Esophagus muscularis mucosa (tissue), 4 donors: ENCODE measurements at regions of chr15 and their contacts with region 1.

Region 1: DNA sequence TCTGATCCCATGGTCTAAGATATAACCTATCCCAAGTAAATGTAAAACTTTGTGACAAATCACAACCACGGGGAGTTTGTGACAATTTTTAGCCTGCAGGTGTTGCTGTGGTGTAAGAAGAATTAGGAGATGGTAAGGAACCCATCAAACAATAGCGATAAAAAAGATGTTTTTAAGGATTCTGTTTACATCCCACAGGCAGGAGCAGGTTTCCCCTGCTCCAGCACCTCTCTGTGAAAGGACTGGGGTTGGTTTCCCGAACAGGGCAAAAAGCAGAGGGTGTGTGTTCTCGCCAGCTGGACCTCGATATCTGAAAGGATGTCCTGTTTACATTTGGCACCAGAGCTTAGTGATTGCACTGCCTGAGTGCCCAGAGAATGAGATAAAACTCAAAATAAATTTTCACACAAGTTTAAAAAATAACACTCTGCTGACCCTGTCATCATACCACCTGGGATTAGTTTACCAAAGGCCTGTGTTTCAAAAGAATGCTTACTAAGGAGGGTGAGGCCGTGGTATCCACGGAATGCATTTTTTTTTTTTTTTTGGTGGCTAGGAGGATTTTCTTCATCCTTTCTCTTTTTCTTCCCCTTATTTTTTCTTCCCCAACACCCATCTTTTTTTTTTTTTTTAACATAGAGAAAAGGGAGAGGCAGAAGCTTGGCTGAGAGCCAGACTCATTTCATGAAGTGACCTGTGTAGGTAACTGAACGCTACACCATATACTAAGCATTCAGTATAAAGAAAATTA is 151.8 kb upstream of the DPH6 start:
- DNase-seq: no peak
- H3K4me3 ChIP-seq: peak overlapping the region in 1 of 4 donors; percentile 22
- H3K27ac ChIP-seq: peak overlapping the region; percentile 51 to 74 (median 60)
- H3K4me1 ChIP-seq: peaks cover 49 to 65% (median 52%) of the 10 kb centered on the region in 4 donors
- H3K27me3 ChIP-seq: no peaks in the 10 kb centered on the region
- CTCF ChIP-seq: peak; percentile 10 to 32 (median 28)
- EP300 ChIP-seq: no peak
- POLR2A ChIP-seq: no peak

Region 2: GRCh38 chr15:35545824-35546510 is 151.8 kb before region 1 on chr15 and contains the start of gene DPH6:
- intact Hi-C with region 1: loop called (anchors 10 kb)
- DNase-seq: peak; percentile 95
- H3K4me3 ChIP-seq: peak within 1 kb of the TSS; percentile 74 to 85 (median 80)
- H3K27ac ChIP-seq: peak within 1 kb of the TSS; percentile 93 to 98 (median 96)
- H3K4me1 ChIP-seq: peaks cover 9 to 37% (median 33%) of the 10 kb centered on the region in 4 donors
- H3K27me3 ChIP-seq: no peaks in the 10 kb centered on the region
- CTCF ChIP-seq: peak in 2 of 3 experiments; percentile 7 to 9
- EP300 ChIP-seq: no peak
- POLR2A ChIP-seq: no peak
- total RNA-seq, gene DPH6: 7.7 to 12.9 (median 8.5) TPM

Region 3: DNA sequence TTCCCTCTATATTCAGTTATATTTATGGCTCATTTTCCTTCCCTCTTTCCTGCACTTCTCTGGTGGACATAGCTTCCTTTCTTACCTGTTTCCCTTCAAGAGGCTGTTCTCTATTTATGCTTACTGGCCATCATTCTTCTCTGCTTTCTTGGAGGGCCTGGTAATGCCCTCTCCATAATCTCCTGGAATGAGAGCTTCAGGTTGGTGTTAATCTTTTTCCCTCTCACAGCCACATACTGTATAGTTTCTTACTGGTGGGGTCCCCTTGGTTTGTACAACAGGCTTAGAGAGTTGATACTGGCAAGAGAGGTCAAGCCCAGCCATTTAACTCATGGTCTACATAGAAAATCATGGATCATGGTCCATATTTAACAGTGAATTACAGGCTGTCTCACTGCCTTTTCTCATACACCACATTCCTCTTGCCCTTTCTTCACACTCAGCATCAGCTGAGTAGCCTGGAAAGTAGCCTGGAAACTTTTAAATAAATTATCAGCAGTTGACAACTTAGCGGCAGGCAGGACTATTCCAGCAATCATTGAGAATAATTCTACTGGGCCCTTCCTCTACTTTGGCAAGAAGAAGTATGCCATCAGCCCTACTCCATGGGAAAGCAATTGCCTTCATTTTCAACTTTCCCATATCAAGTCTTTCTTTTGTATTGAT is 113.7 kb before region 1 on chr15:
- intact Hi-C with region 1: no loop called
- DNase-seq: no peak
- H3K4me3 ChIP-seq: no peak overlapping the region
- H3K27ac ChIP-seq: peak overlapping the region; percentile 52 to 74 (median 66)
- H3K4me1 ChIP-seq: peaks cover 16 to 48% (median 29%) of the 10 kb centered on the region in 4 donors
- H3K27me3 ChIP-seq: no peaks in the 10 kb centered on the region
- CTCF ChIP-seq: no peak
- EP300 ChIP-seq: no peak
- POLR2A ChIP-seq: no peak

Region 4: DNA sequence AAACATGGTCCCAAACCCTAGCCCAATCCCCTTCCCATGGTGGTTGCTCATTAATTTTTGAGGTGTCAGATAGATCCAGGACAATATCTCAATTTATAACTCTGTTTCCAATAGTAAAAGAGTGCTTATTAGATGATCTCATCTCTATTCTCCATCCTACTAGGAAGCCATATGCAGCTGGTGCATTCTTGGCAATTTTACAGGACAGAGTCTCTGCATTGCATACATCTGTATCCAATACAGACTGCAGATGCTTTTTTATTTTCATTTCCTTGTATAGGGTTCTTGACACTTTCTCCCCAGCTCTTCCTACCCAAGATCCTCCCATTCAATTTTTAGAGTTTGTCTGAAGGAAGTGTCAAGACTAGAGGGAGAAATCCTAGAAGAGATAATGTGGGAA is 43.0 kb after region 1 on chr15:
- intact Hi-C with region 1: no loop called
- DNase-seq: no peak
- H3K4me3 ChIP-seq: no peak overlapping the region
- H3K27ac ChIP-seq: no peak overlapping the region
- H3K4me1 ChIP-seq: no peaks in the 10 kb centered on the region
- H3K27me3 ChIP-seq: no peaks in the 10 kb centered on the region
- CTCF ChIP-seq: no peak
- EP300 ChIP-seq: no peak
- POLR2A ChIP-seq: no peak

Region 5: DNA sequence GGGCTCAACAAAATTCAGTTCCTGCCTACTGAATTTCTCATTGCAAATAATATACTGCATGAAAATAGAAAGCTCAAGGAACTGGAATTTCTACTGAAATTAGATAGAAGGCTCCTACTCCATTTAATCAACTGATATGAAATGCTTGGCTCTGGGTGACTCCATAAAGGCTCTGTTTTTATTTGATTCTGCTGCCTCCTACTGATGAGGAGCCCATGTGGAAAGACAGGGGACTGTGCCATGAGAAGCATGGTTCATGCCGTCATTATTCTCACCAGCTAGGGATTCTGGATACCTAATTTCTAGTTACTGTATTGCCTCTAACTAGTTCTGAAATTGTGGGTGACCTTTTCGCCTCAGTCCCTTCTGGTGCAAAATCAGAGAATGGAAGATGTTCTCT is 214.5 kb after region 1 on chr15:
- intact Hi-C with region 1: no loop called
- DNase-seq: no peak
- H3K4me3 ChIP-seq: no peak overlapping the region
- H3K27ac ChIP-seq: no peak overlapping the region
- H3K4me1 ChIP-seq: peaks cover 0 to 14% (median 3%) of the 10 kb centered on the region in 4 donors
- H3K27me3 ChIP-seq: no peaks in the 10 kb centered on the region
- CTCF ChIP-seq: peak in 1 of 3 experiments; percentile 32
- EP300 ChIP-seq: no peak
- POLR2A ChIP-seq: no peak